ENCODE measurements at regions of chr1 and their contacts with region 1.

Region 1: GRCh38 chr1:92298573-92299476 is at the starts of genes GLMN and RPAP2:
- DNase-seq: peak; percentile 40 to 89 (median 60)
- ATAC-seq: peak; percentile 96
- H3K4me3 ChIP-seq: peak within 1 kb of the TSS; percentile 98
- H3K4me3 Mint-ChIP-seq: peak within 1 kb of the TSS; percentile 100
- H3K27ac ChIP-seq: peak within 1 kb of the TSS; percentile 86 to 93
- H3K27ac Mint-ChIP-seq: peak within 1 kb of the TSS; percentile 96
- H3K4me1 ChIP-seq: peaks cover 12% of the 10 kb centered on the region
- H3K4me1 Mint-ChIP-seq: peaks cover 54% of the 10 kb centered on the region
- H3K27me3 ChIP-seq: no peaks in the 10 kb centered on the region
- H3K27me3 Mint-ChIP-seq: no peaks in the 10 kb centered on the region
- CTCF ChIP-seq: no peak
- total RNA-seq, gene GLMN: 7.7 to 11.7 TPM
- total RNA-seq, gene RPAP2: 23.4 to 26.5 TPM

Region 2: DNA sequence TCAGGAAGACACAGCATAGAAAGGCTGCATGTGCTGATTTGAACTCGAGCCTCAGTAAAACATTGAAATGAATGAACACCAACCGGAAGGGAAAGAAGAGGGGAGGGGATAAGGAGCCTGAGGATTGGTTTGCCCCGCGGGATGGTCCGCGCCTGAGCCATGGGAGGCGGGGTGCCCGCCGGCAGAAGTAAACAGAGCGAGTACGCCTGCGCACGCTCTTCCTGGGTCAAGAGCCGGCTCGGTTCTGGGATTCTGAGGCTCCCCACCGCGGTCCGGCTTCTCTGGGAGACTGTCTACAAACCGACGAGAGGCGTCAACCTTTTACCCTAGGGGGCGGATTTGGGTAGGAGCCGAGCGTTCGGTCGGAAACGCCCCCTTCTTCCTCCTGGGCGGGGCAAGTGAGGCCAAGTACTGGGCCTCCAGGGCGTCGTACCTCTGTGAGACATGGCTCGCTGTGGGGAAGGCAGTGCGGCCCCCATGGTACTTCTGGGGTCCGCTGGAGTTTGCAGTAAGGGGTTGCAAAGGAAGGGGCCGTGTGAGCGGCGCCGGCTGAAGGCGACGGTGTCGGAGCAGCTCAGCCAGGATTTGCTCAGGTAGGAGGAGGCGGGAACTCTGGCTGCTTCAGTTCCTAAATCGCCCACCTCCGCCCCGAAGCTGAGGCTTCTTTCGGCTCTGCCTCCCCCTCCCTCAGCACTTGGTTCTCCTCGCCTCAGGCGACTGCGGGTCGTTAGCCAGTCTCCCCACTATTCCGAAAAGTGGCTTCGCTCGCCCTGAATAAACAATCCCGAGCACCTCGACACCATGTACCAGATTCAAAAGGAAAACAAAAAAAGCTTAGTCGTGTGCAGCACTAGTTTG is 218.5 kb before region 1 on chr1 and contains the start of gene BTBD8:
- CTCF ChIA-PET with region 1: no interaction called
- POLR2A ChIA-PET with region 1: interaction called, 3 read pairs
- intact Hi-C with region 1: loop called in 1 of 2 experiments (anchors 5 kb)
- DNase-seq: peak; percentile 73 to 92 (median 84)
- ATAC-seq: peak; percentile 95
- H3K4me3 ChIP-seq: peak within 1 kb of the TSS; percentile 69
- H3K4me3 Mint-ChIP-seq: peak within 1 kb of the TSS; percentile 94
- H3K27ac ChIP-seq: peak within 1 kb of the TSS; percentile 23 to 64
- H3K27ac Mint-ChIP-seq: peak within 1 kb of the TSS; percentile 94
- H3K4me1 ChIP-seq: peaks cover 8% of the 10 kb centered on the region
- H3K4me1 Mint-ChIP-seq: peaks cover 25% of the 10 kb centered on the region
- H3K27me3 ChIP-seq: no peaks in the 10 kb centered on the region
- H3K27me3 Mint-ChIP-seq: no peaks in the 10 kb centered on the region
- CTCF ChIP-seq: peak; percentile 22
- total RNA-seq, gene BTBD8: 1.8 to 2.8 TPM

Region 3: GRCh38 chr1:92310185-92310597 is 11.4 kb after region 1 on chr1:
- CTCF ChIA-PET with region 1: interaction called, 16 read pairs
- POLR2A ChIA-PET with region 1: interaction called, 11 read pairs
- intact Hi-C with region 1: no loop called
- DNase-seq: peak in 3 of 14 experiments; percentile 62 to 66 (median 64)
- ATAC-seq: peak; percentile 72
- H3K4me3 ChIP-seq: no peak overlapping the region
- H3K4me3 Mint-ChIP-seq: no peak overlapping the region
- H3K27ac ChIP-seq: no peak overlapping the region
- H3K27ac Mint-ChIP-seq: no peak overlapping the region
- H3K4me1 ChIP-seq: peaks cover 24% of the 10 kb centered on the region
- H3K4me1 Mint-ChIP-seq: peaks cover 39% of the 10 kb centered on the region
- H3K27me3 ChIP-seq: no peaks in the 10 kb centered on the region
- H3K27me3 Mint-ChIP-seq: no peaks in the 10 kb centered on the region
- CTCF ChIP-seq: peak; percentile 75

Region 4: GRCh38 chr1:92317836-92318493 is 19.1 kb after region 1 on chr1:
- CTCF ChIA-PET with region 1: interaction called, 4 read pairs
- POLR2A ChIA-PET with region 1: interaction called, 11 read pairs
- intact Hi-C with region 1: loop called in 1 of 2 experiments (anchors 2 kb)
- DNase-seq: peak in 4 of 14 experiments; percentile 11 to 72 (median 60)
- ATAC-seq: peak; percentile 39
- H3K4me3 ChIP-seq: no peak overlapping the region
- H3K4me3 Mint-ChIP-seq: peak overlapping the region; percentile 30
- H3K27ac ChIP-seq: peak overlapping the region in 1 of 2 donors; percentile 40
- H3K27ac Mint-ChIP-seq: peak overlapping the region; percentile 85
- H3K4me1 ChIP-seq: peaks cover 38% of the 10 kb centered on the region
- H3K4me1 Mint-ChIP-seq: peaks cover 59% of the 10 kb centered on the region
- H3K27me3 ChIP-seq: no peaks in the 10 kb centered on the region
- H3K27me3 Mint-ChIP-seq: no peaks in the 10 kb centered on the region
- CTCF ChIP-seq: no peak

Region 5: GRCh38 chr1:93179886-93180722 is 881.3 kb after region 1 on chr1 and contains the start of gene TMED5:
- CTCF ChIA-PET with region 1: no interaction called
- POLR2A ChIA-PET with region 1: no interaction called
- intact Hi-C with region 1: loop called in 1 of 2 experiments (anchors 5 kb)
- DNase-seq: peak; percentile 88 to 99 (median 94)
- ATAC-seq: peak; percentile 78
- H3K4me3 ChIP-seq: peak within 1 kb of the TSS; percentile 91
- H3K4me3 Mint-ChIP-seq: peak within 1 kb of the TSS; percentile 93
- H3K27ac ChIP-seq: peak within 1 kb of the TSS; percentile 97 to 98
- H3K27ac Mint-ChIP-seq: peak within 1 kb of the TSS; percentile 95
- H3K4me1 ChIP-seq: peaks cover 25% of the 10 kb centered on the region
- H3K4me1 Mint-ChIP-seq: peaks cover 52% of the 10 kb centered on the region
- H3K27me3 ChIP-seq: no peaks in the 10 kb centered on the region
- H3K27me3 Mint-ChIP-seq: no peaks in the 10 kb centered on the region
- CTCF ChIP-seq: peak; percentile 14
- total RNA-seq, gene TMED5: 42.3 to 43.2 TPM